ENCODE measurements at regions of chr5 and their contacts with region 1.

Region 1: DNA sequence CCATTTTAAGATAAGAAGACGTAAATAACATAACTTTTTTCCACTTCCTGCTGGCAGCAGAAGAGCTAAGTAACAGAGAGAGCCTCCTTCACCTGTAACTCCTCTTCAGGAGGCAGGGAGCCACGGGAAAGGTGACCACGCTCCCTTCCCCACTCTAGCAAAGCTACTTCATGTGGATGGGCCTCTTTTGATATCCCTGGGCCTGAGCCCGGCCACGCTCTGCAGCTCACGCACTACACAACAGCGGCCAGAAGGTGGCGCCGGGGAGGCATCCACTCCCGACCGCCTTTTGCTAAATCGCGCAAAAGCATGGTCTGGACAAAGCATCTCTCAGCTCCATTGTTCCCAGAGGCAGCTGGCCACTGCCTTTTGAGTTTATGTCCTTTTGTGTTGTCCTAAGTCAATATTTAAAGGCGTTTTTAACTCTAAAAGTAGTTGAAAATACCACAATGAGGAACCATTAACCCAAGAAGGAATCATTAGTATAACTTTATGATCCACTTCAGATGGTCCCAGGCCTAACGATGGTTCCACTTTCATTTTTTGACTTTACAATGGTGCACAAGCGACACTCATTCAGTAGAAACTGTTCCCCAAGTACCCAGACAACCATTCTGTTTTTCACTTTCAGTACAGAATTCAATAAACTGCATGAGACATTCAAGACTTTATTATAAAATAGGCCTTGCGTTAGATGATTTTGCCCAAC is 23.6 kb downstream of the CMBL start:
- DNase-seq: peak; percentile 89
- H3K4me3 ChIP-seq: no peak overlapping the region
- H3K27ac ChIP-seq: no peak overlapping the region
- H3K4me1 ChIP-seq: peaks cover 0 to under 1% (median 0%) of the 10 kb centered on the region in 4 donors
- H3K27me3 ChIP-seq: no peaks in the 10 kb centered on the region
- CTCF ChIP-seq: peak; percentile 85 to 90 (median 86)
- EP300 ChIP-seq: no peak
- POLR2A ChIP-seq: no peak

Region 2: GRCh38 chr5:10310066-10310779 is 26.1 kb after region 1 on chr5:
- intact Hi-C with region 1: no loop called
- DNase-seq: no peak
- H3K4me3 ChIP-seq: no peak overlapping the region
- H3K27ac ChIP-seq: no peak overlapping the region
- H3K4me1 ChIP-seq: peaks cover 0 to 14% (median 11%) of the 10 kb centered on the region in 4 donors
- H3K27me3 ChIP-seq: no peaks in the 10 kb centered on the region
- CTCF ChIP-seq: no peak
- EP300 ChIP-seq: no peak
- POLR2A ChIP-seq: no peak

Region 3: GRCh38 chr5:10333154-10334006 is 49.3 kb after region 1 on chr5:
- intact Hi-C with region 1: loop called (anchors 10 kb)
- DNase-seq: no peak
- H3K4me3 ChIP-seq: peak overlapping the region; percentile 35 to 73 (median 64)
- H3K27ac ChIP-seq: peak overlapping the region; percentile 0 to 66 (median 40)
- H3K4me1 ChIP-seq: peaks cover 0 to 56% (median 49%) of the 10 kb centered on the region in 4 donors
- H3K27me3 ChIP-seq: no peaks in the 10 kb centered on the region
- CTCF ChIP-seq: peak in 2 of 4 experiments; percentile 12 to 13
- EP300 ChIP-seq: no peak
- POLR2A ChIP-seq: no peak

Region 4: DNA sequence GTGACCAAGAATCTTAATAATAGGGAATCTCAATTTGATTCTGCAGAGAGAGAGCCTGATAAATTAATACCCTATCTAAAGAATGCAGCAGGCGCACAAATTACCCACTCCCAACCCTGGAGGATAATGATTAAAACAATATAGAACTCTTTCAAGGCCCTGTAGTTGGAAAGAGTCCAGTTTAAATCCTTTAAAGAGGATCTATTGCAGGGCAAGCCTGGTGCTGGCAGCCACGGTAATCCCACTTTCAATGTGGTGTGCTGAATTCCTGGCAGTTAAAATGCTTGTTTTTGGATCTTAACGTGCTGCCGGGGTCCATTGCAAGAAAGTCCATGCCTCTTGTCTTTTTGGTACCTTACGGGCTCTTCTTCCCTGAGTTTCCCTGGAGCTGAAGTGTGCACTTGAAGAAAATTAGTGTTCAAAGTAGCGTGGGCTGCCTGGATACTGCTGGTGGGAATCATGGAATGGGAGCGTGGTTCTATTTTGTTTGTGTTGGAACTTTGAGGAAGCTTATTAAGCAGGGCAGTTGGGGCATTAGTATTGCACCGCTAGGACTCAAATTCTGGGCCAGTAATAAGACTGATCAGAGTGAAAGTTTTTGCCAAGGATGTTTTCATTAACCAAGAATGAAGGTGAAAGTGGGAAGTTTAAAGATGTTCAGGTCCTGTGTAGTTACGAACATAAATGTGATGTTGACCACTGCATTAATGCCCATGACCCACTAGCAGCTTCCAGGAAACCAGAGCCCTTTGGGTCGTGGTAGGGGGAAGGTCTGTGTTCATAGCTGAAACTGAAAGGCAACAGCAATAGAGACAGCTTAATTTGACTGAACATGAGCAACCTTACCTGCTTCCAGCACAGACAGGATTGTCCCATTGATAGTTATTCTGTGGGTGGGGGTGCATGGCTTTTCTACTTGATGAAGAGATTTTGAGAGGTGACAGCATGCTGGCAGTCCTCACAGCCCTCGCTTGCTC is 90.3 kb after region 1 on chr5:
- intact Hi-C with region 1: loop called (anchors 5 kb)
- DNase-seq: no peak
- H3K4me3 ChIP-seq: no peak overlapping the region
- H3K27ac ChIP-seq: peak overlapping the region in 1 of 4 donors; percentile 2
- H3K4me1 ChIP-seq: peaks cover 0 to 70% (median 51%) of the 10 kb centered on the region in 4 donors
- H3K27me3 ChIP-seq: no peaks in the 10 kb centered on the region
- CTCF ChIP-seq: no peak
- EP300 ChIP-seq: no peak
- POLR2A ChIP-seq: no peak

Region 5: GRCh38 chr5:10627160-10627701 is 343.1 kb after region 1 on chr5:
- intact Hi-C with region 1: loop called (anchors 1 kb)
- DNase-seq: peak; percentile 43
- H3K4me3 ChIP-seq: peak overlapping the region in 3 of 4 donors; percentile 20 to 32 (median 31)
- H3K27ac ChIP-seq: peak overlapping the region; percentile 33 to 66 (median 58)
- H3K4me1 ChIP-seq: peaks cover 0 to 15% (median 12%) of the 10 kb centered on the region in 4 donors
- H3K27me3 ChIP-seq: peaks cover 0 to 7% (median 0%) of the 10 kb centered on the region in 3 donors
- CTCF ChIP-seq: no peak
- EP300 ChIP-seq: no peak
- POLR2A ChIP-seq: no peak

Measured in sigmoid colon (tissue), 7 donors.